Endothelial cell of umbilical vein (primary cell): ENCODE measurements at regions of chr20 and their contacts with region 1.

Region 1: DNA sequence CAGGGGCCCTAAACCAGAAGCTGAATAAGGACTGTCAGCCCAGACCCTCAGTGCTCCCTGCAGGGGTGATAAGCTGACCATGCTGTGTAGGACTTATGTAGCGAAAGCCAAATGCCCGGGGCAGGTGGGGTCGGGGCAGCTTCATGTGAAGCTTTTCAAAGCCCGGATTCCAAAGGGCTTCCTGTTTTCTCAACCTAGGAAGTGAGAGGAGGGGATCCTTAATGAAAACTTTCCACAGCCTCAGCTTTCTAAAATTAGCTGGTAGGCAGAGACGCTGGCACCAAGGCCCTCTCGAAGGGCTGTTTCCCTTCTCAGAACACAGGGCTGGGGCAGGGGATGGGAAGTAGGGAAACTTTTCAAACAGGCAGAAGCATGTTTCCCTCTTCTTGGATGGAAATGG is 148.9 kb downstream of the NFATC2 start:
- DNase-seq: peak; percentile 87
- H3K4me3 ChIP-seq: no peak overlapping the region
- H3K27ac ChIP-seq: peak overlapping the region; percentile 13
- H3K4me1 ChIP-seq: peaks cover 38% of the 10 kb centered on the region
- H3K27me3 ChIP-seq: no peaks in the 10 kb centered on the region
- CTCF ChIP-seq: no peak
- POLR2A ChIP-seq: no peak

Region 2: DNA sequence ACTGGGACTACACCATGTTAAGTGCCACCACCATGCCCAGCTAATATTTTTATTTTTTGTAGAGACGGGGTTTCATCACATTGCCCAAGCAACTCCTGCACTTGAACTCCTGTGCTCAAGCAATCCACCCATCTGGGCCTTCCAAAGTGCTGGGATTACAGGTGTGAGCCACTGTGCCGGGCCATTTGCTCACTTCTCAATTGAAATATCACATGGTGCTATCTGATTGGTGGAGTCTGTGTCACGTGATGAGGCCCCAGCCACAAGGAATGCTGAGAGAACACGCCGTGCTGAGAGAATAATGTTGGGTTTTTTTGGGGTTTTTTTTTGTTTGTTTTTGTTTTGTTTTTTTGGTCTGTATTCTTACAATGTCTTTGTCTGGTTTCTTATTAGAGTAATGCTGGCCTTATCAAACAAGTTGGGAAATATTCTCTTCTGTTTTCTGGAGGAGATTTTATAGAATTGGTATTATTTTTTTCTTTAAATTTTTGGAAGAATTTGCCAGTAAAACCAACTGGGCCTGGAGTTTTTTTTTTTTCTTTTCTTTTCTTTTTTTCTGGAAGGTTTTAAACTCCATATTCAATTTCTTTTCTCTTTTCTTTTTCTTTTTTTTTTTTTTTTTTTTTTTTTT is 187.4 kb before region 1 on chr20:
- CTCF ChIA-PET with region 1: no interaction called
- POLR2A ChIA-PET with region 1: no interaction called
- dilution Hi-C with region 1: no loop called
- intact Hi-C with region 1: no loop called
- DNase-seq: no peak
- H3K4me3 ChIP-seq: no peak overlapping the region
- H3K27ac ChIP-seq: no peak overlapping the region
- H3K4me1 ChIP-seq: no peaks in the 10 kb centered on the region
- H3K27me3 ChIP-seq: peaks cover 18 to 28% of the 10 kb centered on the region in 2 experiments
- CTCF ChIP-seq: no peak
- POLR2A ChIP-seq: no peak

Region 3: GRCh38 chr20:51412333-51412871 is 18.8 kb after region 1 on chr20:
- CTCF ChIA-PET with region 1: interaction called, 4 read pairs
- POLR2A ChIA-PET with region 1: interaction called, 3 read pairs
- dilution Hi-C with region 1: no loop called
- intact Hi-C with region 1: loop called (anchors 1 kb)
- DNase-seq: peak; percentile 69
- H3K4me3 ChIP-seq: no peak overlapping the region
- H3K27ac ChIP-seq: peak overlapping the region; percentile 39
- H3K4me1 ChIP-seq: peaks cover 32% of the 10 kb centered on the region
- H3K27me3 ChIP-seq: no peaks in the 10 kb centered on the region
- CTCF ChIP-seq: no peak
- POLR2A ChIP-seq: no peak

Region 4: DNA sequence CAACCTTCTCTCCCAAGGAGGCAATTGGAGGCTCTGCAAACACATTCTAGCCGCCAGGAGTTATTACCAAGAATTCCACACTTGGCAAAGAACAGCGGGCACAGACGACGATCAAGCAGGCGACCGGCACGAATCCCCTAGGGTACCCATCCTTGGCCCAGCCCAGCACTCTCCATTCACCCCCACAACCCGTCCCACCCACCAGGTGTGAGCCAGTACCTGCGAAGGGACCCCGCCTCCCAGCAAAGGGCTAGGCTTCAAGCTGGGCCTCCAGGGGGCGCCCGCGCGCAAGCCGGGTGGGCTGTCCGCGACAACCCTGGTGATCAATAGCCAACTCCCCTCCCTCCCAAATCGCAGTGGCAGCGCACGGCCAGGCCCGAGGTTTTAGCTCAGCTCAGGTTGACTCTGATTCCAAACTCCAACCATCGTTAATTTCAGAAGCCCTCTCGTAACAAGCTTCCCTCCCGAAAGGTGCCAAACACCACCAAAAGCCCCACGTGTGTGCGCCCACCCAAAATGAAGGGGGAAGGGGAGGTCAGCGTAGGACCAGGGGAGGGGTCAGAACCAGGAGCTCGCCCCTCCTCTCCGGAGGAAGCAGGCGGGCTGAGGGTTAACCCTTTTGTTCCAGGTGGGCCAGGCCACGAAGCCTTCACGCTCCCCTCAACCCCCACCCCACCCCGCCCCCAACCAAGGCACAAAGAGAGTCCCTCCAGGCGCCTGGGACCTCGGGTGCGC is 406.7 kb after region 1 on chr20:
- CTCF ChIA-PET with region 1: no interaction called
- POLR2A ChIA-PET with region 1: no interaction called
- dilution Hi-C with region 1: no loop called
- intact Hi-C with region 1: no loop called
- DNase-seq: peak; percentile 62
- H3K4me3 ChIP-seq: peak overlapping the region; percentile 49 to 80 (median 78)
- H3K27ac ChIP-seq: no peak overlapping the region
- H3K4me1 ChIP-seq: peaks cover 14% of the 10 kb centered on the region
- H3K27me3 ChIP-seq: peaks cover 10 to 30% of the 10 kb centered on the region in 2 experiments
- CTCF ChIP-seq: peak; percentile 95 to 99
- POLR2A ChIP-seq: no peak